ENCODE measurements at regions of chr16 and their contacts with region 1.

Region 1: GRCh38 chr16:84726079-84726668 is 26.4 kb downstream of the USP10 start:
- DNase-seq: peak; percentile 84
- H3K4me3 Mint-ChIP-seq: no peak overlapping the region
- H3K27ac Mint-ChIP-seq: no peak overlapping the region
- H3K4me1 Mint-ChIP-seq: peaks cover 62% of the 10 kb centered on the region
- H3K27me3 Mint-ChIP-seq: no peaks in the 10 kb centered on the region

Region 2: GRCh38 chr16:84511180-84511824 is 214.9 kb before region 1 on chr16:
- CTCF ChIA-PET with region 1: interaction called, 16 read pairs
- POLR2A ChIA-PET with region 1: interaction called, 3 read pairs
- DNase-seq: peak; percentile 79
- H3K4me3 Mint-ChIP-seq: no peak overlapping the region
- H3K27ac Mint-ChIP-seq: peak overlapping the region; percentile 99
- H3K4me1 Mint-ChIP-seq: peaks cover 81% of the 10 kb centered on the region
- H3K27me3 Mint-ChIP-seq: peaks cover 2% of the 10 kb centered on the region

Region 3: DNA sequence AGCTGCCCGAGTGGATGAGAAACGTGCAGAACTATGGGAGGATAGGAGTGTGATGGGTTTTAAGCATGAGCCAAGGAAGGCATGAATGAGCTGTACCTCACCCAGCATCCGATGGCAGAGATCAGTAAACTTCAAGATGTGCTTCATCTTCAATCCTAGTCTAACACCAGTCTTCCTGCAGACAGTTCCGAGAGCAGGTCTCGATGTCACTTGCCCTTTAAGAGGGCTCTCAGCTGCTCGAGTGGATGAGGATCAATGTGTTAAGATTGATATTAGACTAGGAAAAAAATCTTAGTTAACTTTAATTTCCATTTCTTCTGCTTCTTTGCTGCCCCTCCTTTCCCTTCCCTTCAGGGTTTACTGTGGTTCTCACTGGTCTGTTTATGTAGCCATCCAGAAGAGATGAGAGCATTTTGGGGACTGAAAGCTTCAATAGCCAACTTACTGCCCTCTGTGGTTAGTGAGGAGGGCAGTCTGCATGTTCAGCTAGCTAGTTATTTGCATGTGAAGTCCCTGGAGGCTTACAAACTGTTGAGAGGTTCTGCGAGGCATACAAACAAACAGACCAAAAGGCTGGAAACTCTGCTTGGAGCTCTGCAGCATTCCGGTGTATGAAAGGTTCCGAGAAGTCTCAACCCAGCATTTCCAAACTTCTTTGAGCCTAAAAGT is 62.6 kb before region 1 on chr16:
- CTCF ChIA-PET with region 1: interaction called, 17 read pairs
- POLR2A ChIA-PET with region 1: no interaction called
- DNase-seq: no peak
- H3K4me3 Mint-ChIP-seq: no peak overlapping the region
- H3K27ac Mint-ChIP-seq: no peak overlapping the region
- H3K4me1 Mint-ChIP-seq: peaks cover 16% of the 10 kb centered on the region
- H3K27me3 Mint-ChIP-seq: no peaks in the 10 kb centered on the region

Region 4: GRCh38 chr16:84699712-84700445 is 26.3 kb before region 1 on chr16 and contains the start of gene USP10:
- CTCF ChIA-PET with region 1: interaction called, 31 read pairs
- POLR2A ChIA-PET with region 1: interaction called, 5 read pairs
- DNase-seq: peak; percentile 87
- H3K4me3 Mint-ChIP-seq: peak within 1 kb of the TSS; percentile 97
- H3K27ac Mint-ChIP-seq: peak within 1 kb of the TSS; percentile 94
- H3K4me1 Mint-ChIP-seq: peaks cover 41% of the 10 kb centered on the region
- H3K27me3 Mint-ChIP-seq: peaks cover 4% of the 10 kb centered on the region
- total RNA-seq, gene USP10: 92.2 to 94.4 TPM

Region 5: GRCh38 chr16:84738255-84739038 is 12.3 kb after region 1 on chr16:
- CTCF ChIA-PET with region 1: interaction called, 45 read pairs
- POLR2A ChIA-PET with region 1: interaction called, 3 read pairs
- DNase-seq: peak; percentile 79
- H3K4me3 Mint-ChIP-seq: peak overlapping the region; percentile 46
- H3K27ac Mint-ChIP-seq: peak overlapping the region; percentile 44
- H3K4me1 Mint-ChIP-seq: peaks cover 73% of the 10 kb centered on the region
- H3K27me3 Mint-ChIP-seq: no peaks in the 10 kb centered on the region

Measured in activated CD4-positive, alpha-beta memory T cell treated with anti-CD3 and anti-CD28 coated beads, Interleukin-2, amount 10 ng/mL, durations not matched to agents 7 days and 5 days (primary cell).